ENCODE measurements at regions of chr1 and their contacts with region 1.

Region 1: GRCh38 chr1:205485338-205486228 is 18.9 kb upstream of the CDK18 start:
- DNase-seq: peak; percentile 76 to 79 (median 76)
- ATAC-seq: peak; percentile 81
- H3K4me3 ChIP-seq: no peak overlapping the region
- H3K27ac ChIP-seq: no peak overlapping the region
- H3K4me1 ChIP-seq: peaks cover 7% of the 10 kb centered on the region
- H3K27me3 ChIP-seq: no peaks in the 10 kb centered on the region
- CTCF ChIP-seq: peak; percentile 89 to 98 (median 92)
- POLR2A ChIP-seq: no peak

Region 2: GRCh38 chr1:205344066-205344928 is 141.3 kb before region 1 on chr1:
- intact Hi-C with region 1: loop called (anchors 10 kb)
- DNase-seq: peak in 3 of 4 donors; percentile 44 to 57 (median 45)
- ATAC-seq: peak; percentile 65
- H3K4me3 ChIP-seq: no peak overlapping the region
- H3K27ac ChIP-seq: no peak overlapping the region
- H3K4me1 ChIP-seq: peaks cover 16% of the 10 kb centered on the region
- H3K27me3 ChIP-seq: peaks cover 0 to 4% of the 10 kb centered on the region in 2 donors
- CTCF ChIP-seq: no peak
- POLR2A ChIP-seq: peak in 1 of 3 donors; percentile 15